Naive thymus-derived CD8-positive, alpha-beta T cell (primary cell): ENCODE measurements at regions of chr19 and their contacts with region 1.

Region 1: DNA sequence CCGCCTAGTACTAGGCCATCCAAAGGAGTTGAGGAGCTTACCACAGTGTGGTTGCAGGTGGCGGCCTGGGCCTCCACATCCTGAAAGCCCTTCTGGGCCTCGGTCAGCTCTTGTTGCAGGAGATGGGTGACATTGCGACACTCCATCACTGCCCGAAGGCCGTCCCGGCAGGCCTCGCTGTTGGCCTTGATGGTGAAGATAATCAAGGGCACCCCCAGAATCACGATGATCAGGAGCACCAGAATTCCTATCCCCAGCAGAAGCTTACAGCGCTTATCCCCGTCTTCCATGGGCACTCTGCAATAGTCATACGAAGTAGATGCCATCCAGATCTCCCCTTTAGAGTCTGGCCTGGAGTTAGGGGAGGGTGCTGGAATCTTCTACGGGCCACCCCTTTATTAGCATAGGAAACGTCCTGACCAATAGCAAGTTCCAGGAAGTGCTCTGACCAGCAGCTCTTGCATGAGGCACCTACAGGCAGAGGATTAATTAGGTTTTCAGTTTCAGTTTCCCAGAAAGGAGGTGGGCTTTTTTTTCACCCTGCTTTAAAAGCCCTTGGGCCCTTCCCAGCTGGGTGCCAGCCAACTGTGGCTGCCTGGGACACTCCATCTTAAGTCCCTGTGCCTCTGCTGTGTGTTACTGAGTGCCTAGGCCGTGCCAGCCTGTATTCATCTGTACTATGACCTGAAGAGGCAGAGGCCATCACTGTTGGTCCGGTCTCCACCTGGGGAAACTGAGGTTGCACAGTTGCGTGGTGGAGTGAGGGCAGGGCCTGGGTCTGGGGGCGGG is at the start of gene BST2:
- DNase-seq: peak in 9 of 10 donors; percentile 27 to 74 (median 54)
- ATAC-seq: peak; percentile 80 to 89
- H3K4me3 Mint-ChIP-seq: peak within 1 kb of the TSS; percentile 87 to 99 (median 96)
- H3K27ac Mint-ChIP-seq: peak within 1 kb of the TSS; percentile 93 to 97 (median 96)
- H3K4me1 Mint-ChIP-seq: peaks cover 20 to 41% (median 38%) of the 10 kb centered on the region in 4 donors
- H3K27me3 Mint-ChIP-seq: no peaks in the 10 kb centered on the region
- polyA plus RNA-seq, gene BST2: 132 to 178 (median 144) TPM

Region 2: GRCh38 chr19:17390665-17391370 is 14.6 kb before region 1 on chr19:
- POLR2A ChIA-PET with region 1: interaction called, 11 read pairs
- DNase-seq: peak; percentile 83 to 91 (median 86)
- ATAC-seq: peak; percentile 98 to 99
- H3K4me3 Mint-ChIP-seq: peak overlapping the region; percentile 88 to 99 (median 90)
- H3K27ac Mint-ChIP-seq: peak overlapping the region in 7 of 10 donors; percentile 12 to 92 (median 49)
- H3K4me1 Mint-ChIP-seq: peaks cover 11 to 31% (median 26%) of the 10 kb centered on the region in 4 donors
- H3K27me3 Mint-ChIP-seq: no peaks in the 10 kb centered on the region

Region 3: DNA sequence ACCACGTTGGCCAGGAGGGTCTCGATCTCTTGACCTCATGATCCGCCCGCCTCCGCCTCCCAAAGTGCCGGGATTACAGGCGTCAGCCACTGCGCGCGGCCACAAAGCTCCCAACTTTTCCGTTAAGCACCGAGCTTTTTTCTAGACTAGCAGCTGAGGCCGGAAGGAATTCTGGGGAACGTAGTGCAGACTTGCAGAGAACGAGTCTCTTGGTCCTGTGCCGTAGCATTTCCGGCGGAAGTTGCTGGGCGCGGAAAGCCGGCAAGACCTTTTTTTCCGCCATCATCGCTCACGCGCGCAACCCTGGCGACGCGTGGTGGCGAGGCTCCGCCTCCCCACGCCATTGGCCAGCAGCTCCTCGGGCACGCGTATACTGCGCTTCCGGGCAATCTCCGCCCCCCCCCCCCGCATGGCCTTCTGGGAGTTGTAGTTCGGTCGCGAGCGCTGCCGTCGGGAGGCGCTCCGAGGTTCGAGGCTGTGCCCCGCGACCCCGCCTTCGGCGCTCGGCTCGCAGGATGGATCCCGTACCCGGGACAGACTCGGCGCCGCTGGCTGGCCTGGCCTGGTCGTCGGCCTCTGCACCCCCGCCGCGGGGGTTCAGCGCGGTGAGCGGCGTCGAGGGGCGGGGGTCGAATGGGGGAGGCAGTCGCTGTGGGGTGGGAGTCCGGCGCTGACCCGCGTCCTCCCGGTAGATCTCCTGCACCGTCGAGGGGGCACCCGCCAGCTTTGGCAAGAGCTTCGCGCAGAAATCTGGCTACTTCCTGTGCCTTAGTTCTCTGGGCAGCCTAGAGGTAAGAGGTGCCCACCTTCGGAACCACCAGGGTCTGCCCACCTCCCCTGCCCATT is 14.4 kb after region 1 on chr19 and contains the start of gene MVB12A:
- POLR2A ChIA-PET with region 1: interaction called, 29 read pairs
- DNase-seq: peak; percentile 85 to 98 (median 95)
- ATAC-seq: peak; percentile 92 to 95
- H3K4me3 Mint-ChIP-seq: peak within 1 kb of the TSS; percentile 87 to 96 (median 94)
- H3K27ac Mint-ChIP-seq: peak within 1 kb of the TSS; percentile 75 to 95 (median 92)
- H3K4me1 Mint-ChIP-seq: peaks cover 13 to 34% (median 26%) of the 10 kb centered on the region in 4 donors
- H3K27me3 Mint-ChIP-seq: no peaks in the 10 kb centered on the region
- polyA plus RNA-seq, gene MVB12A: 24.3 to 34.6 (median 31.0) TPM

Region 4: GRCh38 chr19:17441241-17442021 is 36.0 kb after region 1 on chr19:
- POLR2A ChIA-PET with region 1: no interaction called
- DNase-seq: peak in 7 of 10 donors; percentile 17 to 58 (median 41)
- ATAC-seq: peak; percentile 72 to 75
- H3K4me3 Mint-ChIP-seq: no peak overlapping the region
- H3K27ac Mint-ChIP-seq: peak overlapping the region in 1 of 10 donors; percentile 55
- H3K4me1 Mint-ChIP-seq: peaks cover 0 to 4% (median 0%) of the 10 kb centered on the region in 4 donors
- H3K27me3 Mint-ChIP-seq: no peaks in the 10 kb centered on the region